Posterior cingulate gyrus (tissue), 11 donors: ENCODE measurements at regions of chr1 and their contacts with region 1.

Region 1: GRCh38 chr1:172443626-172444453 is at the start of gene PIGC:
- DNase-seq: peak; percentile 86 to 99 (median 92)

Region 2: DNA sequence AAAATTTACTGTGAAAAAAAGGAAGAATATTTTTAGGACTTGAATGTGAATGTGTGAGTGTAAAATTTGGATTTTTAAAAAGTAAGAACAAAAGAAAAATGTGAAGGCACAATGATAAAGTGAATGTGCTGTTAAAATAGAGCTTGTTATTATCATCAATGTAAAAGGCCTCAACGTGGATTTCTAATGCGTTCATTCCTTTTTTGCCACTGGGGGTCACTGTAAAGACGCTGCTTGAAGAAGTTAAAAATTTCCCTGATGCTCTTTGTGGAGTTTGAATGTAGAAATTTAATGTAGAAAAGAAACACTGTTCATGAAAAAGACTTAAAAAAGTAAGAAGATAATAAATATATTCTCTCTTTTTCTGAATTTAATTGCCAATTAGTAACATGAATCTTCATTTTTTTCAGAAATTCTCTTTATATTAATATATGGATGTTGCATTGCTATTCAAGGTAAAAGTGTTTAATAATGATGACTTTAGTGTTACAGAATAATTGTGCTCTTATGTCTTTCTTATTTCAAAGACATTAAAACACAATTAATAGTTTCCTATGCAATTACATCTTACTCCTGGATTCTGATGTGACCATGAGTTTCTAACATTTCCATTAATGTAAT is 441.0 kb before region 1 on chr1:
- intact Hi-C with region 1: loop called (anchors 1 kb)
- DNase-seq: peak in 2 of 10 donors; percentile 13 to 31

Region 3: GRCh38 chr1:172408958-172409357 is 34.9 kb before region 1 on chr1:
- intact Hi-C with region 1: no loop called
- DNase-seq: no peak

Region 4: GRCh38 chr1:172532700-172533509 is 89.1 kb after region 1 on chr1 and contains the start of gene SUCO:
- intact Hi-C with region 1: loop called (anchors 2 kb)
- DNase-seq: peak; percentile 100

Region 5: GRCh38 chr1:172638885-172639831 is 195.3 kb after region 1 on chr1:
- intact Hi-C with region 1: no loop called
- DNase-seq: peak in 1 of 10 donors; percentile 78